Right ventricle myocardium inferior (tissue), 1 donor: ENCODE measurements at regions of chr10 and their contacts with region 1.

Region 1: DNA sequence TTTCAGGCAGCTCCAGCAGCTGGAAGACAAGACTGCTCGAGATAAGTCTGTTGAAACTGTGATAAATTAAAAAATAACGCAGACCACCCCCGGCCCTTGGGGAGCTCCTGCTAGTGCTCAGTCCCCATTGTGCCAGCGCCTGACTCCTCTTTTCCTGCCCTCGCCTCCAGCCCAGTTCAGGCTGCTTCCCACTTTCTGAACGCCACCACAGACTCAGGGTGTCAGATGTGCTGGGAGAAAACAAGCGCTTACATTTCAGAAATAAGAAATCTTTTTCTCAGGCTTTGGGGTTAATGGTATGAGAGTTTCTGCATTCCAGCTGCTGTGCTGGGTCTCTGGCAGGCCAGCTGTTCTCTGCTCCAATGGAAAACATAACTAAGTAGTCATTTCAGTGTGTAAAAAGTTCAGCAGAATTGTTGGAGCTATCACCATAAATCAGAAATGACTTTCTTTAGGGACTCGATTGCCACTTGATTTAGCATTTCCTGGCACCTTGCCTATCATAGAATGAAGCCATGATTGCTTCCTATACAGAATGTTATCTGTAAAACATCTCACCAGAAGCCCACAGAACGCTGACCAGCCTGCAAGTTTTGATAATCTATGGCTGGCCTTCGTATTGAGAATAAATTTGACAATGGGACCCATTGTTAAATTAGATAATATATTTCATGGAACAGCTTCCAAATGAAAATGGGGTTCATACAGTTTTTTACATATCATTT is 257.0 kb upstream of the ZNF32 start:
- DNase-seq: peak; percentile 82
- ATAC-seq: peak; percentile 77

Region 2: DNA sequence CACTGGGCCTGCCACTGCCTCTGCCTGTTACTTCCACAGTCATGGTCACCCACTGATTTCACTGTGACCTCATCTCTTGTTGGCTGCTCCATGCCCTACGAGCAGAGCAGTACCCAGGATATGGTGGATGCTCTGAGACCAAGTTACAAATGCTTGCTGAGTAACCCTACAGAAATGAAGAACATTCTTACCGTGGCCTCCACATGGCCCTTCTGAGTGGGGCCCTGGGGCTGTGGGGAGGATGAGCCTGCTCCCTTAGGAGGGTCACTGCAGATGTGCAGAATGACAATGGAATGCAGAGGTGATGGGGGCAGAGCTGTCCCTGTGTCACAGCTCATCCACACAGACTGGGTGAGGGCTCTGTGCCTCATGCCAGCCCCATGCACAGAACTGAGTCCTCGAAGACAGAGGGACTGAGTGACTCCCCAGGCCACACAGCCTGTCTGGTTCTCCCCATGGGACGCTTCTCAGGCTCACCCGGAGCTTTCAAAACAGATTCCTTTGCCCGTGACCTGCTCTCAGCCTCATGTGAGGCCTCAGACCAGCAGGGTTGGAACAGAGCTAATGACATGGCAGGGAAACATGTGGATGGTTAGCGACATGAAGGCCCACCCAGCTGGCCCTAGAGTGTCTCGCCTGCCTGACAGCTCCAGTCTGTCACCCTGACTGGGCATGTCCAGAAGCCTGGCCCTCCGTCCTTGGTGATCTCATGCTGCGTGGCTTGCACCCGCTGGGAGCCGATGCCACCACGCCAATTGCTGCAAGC is 856.9 kb before region 1 on chr10:
- intact Hi-C with region 1: no loop called
- DNase-seq: no peak
- ATAC-seq: no peak

Region 3: GRCh38 chr10:43846187-43846680 is 59.4 kb before region 1 on chr10:
- intact Hi-C with region 1: loop called (anchors 2 kb)
- DNase-seq: peak; percentile 70
- ATAC-seq: no peak

Region 4: DNA sequence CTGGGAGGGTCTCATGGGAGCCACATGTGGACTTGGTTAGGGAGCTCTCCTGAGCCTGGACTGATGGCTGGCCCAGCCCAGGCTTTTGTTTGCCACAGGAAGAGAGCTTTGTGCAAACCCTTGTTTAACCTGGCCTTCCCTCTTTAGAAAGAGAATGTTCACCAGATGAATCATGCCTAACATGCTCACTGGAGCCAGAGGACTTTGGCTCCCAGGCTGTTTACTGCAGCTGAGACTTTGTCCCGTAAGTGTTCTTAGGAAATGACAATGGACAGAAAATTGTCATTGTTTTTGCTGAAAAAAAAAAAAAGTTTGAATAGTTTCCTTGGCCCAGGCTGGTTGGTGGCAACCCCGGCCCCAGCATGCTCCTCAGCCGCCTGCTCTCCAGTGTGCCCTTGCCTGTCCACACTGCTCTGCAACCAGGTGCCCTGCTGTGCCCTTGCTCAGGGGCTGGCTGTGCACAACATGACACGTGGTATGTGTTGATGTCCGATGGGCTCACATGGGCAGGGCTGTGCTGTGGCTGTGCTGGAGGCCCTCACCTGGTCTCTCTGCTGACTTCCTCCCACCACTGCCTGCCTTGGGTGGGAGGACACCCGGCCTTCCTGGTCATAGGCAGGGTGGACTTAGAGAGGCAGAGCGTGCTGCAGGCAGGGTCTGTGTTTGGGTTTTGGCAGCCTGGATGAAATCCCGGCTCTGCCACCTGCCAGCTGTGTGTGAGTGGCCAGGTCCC is 41.6 kb before region 1 on chr10:
- intact Hi-C with region 1: loop called (anchors 5 kb)
- DNase-seq: peak; percentile 55
- ATAC-seq: peak; percentile 78

Region 5: DNA sequence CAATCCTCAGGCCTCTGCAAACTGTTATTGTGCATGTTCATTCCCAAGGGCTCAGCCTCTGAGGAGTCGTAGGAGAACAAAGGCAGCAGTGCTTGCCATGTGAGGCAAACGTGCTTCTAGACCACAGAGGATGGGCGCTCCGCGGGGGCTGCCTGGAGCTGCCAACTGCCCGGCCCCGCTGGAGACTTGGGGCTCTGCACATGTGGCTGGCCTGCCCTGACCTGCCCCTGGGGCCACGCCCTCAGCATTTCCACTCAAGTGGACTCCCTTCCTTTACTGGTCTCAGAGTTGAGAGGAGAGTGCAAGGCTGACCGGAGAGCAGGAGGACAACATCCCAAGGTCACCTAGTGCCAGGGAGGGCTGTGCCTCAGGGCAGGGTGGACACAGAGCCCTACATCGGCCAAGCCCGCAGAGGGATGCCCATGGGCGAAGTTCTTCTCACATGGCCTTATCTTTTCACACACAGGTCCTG is 34.7 kb before region 1 on chr10:
- intact Hi-C with region 1: loop called (anchors 2 kb)
- DNase-seq: peak; percentile 76
- ATAC-seq: peak; percentile 41

Region 6: DNA sequence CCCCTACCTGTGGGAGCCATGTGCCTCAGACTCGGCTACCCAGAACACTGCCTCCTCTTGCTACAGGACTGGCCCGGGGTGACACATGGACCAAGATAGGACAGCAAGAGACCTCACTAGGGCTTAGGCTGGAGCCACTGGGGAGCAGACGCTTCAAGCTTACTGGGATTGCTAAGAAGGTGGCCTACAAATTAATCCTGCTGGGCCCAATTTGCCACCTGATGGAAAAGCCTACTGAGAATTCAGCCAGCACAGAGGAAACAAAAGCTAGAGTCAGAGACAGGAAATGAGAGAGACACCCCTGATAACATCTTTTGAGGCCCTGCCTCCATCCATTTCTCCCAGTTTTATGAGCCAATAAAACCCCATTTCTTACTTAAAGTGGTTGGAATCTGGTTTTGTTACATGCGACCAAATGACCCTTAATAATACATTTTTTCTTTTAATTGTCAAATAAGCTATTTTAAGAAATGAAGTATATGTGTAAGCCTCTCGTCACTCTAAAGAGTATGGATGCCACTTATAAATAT is 197.1 kb after region 1 on chr10:
- intact Hi-C with region 1: no loop called
- DNase-seq: no peak
- ATAC-seq: no peak